Psoas muscle (tissue), 8 donors: ENCODE measurements at regions of chr3 and their contacts with region 1.

Region 1: GRCh38 chr3:123489400-123490004 is 40.6 kb upstream of the ADCY5 start:
- DNase-seq: peak; percentile 69 to 77
- ATAC-seq: peak; percentile 71 to 93 (median 78)
- H3K4me3 ChIP-seq: no peak overlapping the region
- H3K27ac ChIP-seq: no peak overlapping the region
- H3K4me1 ChIP-seq: no peaks in the 10 kb centered on the region
- H3K27me3 ChIP-seq: no peaks in the 10 kb centered on the region
- CTCF ChIP-seq: peak; percentile 80

Region 2: DNA sequence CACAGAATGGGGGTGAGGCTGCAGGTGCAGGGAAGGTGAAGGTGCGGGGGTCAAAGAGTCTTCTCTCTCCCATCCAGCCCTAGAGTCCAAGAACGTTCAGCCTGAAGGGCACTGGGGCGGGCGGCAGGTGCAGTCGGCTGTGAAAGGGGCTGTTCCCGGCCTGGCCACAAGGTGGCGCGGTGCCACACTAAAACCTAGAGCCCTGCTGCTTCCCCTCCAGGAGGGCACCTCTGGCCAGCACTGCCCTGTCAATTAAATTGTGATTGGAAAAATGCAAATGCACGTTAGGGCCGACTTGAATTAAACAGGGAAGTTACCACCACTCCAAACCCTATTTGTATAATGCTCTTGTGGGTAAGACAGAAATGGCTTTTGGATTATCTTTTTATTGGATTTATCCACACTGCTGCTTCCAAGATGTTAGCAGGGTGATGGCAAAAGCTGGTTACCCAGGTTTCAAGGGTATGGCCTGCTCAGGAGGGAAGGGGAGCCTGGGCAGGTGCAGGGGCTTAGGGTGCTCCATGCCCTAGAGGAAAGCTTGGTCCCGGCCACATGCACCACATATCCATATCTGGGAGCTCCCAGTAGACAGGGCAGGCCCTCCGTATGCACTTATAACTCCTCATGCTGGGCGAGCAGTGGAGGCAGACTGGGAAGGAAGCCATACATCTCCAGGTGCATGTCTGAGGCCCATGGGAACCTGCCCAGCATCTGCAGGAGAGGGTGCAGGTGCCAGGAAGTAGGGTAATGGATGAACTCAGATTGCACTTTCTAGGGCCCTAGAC is 160.5 kb before region 1 on chr3:
- intact Hi-C with region 1: loop called (anchors 1 to 2 kb)
- DNase-seq: peak; percentile 80 to 86
- ATAC-seq: peak; percentile 87 to 95 (median 91)
- H3K4me3 ChIP-seq: no peak overlapping the region
- H3K27ac ChIP-seq: no peak overlapping the region
- H3K4me1 ChIP-seq: no peaks in the 10 kb centered on the region
- H3K27me3 ChIP-seq: no peaks in the 10 kb centered on the region
- CTCF ChIP-seq: peak; percentile 95

Region 3: DNA sequence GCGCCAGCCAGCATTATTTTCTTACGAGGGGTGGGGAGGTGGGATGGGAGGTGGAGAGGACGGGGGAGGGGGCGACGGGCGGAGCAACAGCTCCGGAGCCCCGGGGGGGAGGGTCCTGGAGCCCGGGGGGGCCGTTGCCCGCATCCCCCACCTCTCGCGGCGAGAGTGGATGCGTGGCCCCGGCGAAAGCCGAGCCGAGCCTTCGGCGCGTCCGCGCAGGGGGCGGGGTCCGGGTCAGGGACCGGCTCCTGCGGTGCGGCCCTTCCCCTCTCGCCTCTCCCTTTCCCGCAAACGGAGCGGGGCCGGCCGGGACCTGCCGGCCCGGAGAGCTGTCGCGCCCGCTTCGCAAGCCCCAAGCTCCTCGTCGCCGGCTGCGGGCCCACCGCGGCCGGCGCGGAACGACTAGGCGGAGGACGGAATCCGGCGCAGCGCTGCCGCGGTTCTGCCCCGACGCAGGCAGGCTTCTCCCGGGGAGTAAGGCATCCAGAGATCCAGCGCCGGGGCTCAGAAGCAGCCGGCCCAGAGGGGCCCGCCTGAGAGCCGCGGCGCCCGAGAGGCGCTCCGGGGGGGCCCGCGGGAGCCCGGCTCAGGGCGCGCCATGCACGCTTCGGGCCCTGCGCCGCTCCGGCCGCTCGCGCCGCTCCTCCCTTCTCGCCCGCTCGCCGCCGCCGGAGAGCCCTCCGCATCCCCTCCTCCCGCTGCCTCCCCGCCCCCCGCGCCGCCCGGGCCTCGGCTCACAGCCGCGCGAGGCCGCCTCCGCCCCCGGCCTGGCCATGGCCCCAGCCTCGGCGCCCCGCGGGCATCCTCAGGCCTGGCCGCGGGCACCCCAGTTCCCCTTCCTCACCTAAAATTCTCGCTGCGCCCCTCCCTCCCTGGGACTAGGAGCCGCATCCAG is 40.2 kb before region 1 on chr3:
- intact Hi-C with region 1: loop called in 1 of 2 experiments (anchors 5 kb)
- DNase-seq: peak; percentile 40 to 57
- ATAC-seq: peak; percentile 40 to 60 (median 50)
- H3K4me3 ChIP-seq: peak overlapping the region; percentile 72
- H3K27ac ChIP-seq: peak overlapping the region; percentile 55
- H3K4me1 ChIP-seq: no peaks in the 10 kb centered on the region
- H3K27me3 ChIP-seq: peaks cover 0 to 73% (median 16%) of the 10 kb centered on the region in 3 donors
- CTCF ChIP-seq: no peak